Head of caudate nucleus (tissue), 42 donors: ENCODE measurements at regions of chr17 and their contacts with region 1.

Region 1: GRCh38 chr17:8435245-8436168 is at the start of gene NDEL1:
- DNase-seq: peak; percentile 95 to 100 (median 99)

Region 2: DNA sequence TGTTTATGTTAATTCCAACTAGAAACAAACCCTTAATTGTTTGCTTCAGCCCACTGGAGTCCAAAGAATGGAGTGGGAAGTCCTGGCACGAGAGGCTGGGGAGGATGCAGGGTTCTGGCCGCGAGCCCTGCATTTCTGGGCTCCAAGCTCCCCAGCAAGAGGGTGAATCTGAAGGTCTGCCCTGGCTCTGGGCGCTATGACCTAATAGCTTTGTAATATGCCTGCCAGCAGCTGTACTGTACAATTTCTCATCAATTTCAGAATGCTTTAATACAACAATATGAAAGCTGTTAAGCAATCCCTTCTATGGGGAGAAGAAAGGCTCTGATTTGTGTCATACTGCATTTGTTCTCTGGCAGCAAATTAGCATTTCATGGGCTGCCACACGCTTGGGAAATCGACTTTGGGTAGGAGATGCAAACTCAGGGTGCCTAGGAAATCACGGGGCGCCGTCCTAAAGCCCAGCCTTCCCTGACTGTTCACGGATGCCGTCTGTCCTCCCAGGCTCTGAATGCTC is 44.0 kb after region 1 on chr17:
- intact Hi-C with region 1: loop called (anchors 5 kb)
- DNase-seq: peak; percentile 52 to 94 (median 83)

Region 3: DNA sequence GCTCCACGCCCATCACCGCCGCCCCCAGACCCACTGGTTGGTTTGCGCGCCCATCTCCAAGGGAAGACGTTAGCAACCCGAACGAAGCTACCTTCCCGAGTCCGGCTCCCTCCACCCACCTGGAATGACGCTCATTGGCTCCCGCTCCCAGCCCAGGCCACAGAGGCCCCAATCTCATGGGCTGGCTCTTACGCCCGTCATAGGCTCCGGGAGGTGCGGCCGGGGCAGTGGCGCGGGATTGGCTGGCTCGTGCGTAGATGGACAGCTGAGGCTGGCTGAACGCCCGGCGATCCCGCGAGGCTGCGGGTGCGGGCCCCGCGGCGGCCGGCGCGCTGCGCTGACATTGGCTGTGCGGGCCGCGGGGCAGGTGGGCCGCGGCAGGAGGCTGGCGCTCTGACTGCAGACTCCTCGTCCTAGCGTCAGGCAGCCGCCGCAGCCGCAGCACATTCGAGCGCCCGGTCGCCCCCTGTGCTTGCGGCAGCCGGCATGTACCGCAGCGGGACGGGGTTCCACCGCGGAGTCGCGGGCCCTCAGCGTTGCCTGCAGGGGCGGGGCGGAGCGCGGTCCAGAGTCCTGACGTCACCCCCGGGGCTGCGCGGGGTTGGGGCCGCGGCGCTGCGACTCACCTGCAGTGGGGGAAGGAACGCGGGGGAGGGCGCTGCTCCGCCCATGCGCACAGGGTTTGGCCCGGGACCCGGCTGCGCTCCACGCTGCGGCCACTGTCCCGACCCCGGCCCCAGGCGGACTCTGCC is 195.5 kb after region 1 on chr17:
- intact Hi-C with region 1: loop called (anchors 5 kb)
- DNase-seq: peak; percentile 98 to 100 (median 99)